Caco-2 (cell line): ENCODE measurements at regions of chr9 and their contacts with region 1.

Region 1: DNA sequence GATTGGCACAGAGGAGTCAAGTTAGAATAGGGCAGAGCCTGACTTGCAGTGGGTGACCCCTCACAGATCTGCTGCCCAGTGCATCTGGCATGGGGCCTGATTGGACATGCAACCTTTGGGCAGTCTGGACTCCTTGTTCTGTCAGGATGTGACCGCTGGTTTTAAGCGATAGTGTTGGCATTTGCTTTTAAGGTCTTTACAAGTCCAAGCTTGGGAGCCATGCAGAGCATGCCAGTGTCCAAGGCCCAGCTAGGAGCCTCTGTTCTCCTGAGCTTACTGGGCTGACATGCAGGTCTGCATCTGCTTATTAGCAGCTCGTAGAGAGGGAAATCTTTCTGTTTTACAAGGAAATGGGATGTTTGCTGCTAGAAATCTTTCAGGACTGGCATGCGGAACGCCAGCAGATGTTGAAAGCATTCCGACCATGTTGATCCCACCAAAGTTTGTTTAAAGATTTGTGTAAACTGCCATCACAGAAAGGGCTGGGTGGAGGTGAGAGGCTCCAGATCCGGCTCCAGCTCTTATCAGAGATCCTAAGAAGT is 27.5 kb downstream of the GADD45G start:
- DNase-seq: peak in 1 of 2 experiments; percentile 44
- H3K4me3 ChIP-seq: no peak overlapping the region
- H3K4me3 Mint-ChIP-seq: no peak overlapping the region
- H3K27ac Mint-ChIP-seq: peak overlapping the region; percentile 62
- H3K4me1 ChIP-seq: peaks cover 6% of the 10 kb centered on the region; the same call in 1 of the 2 replicates
- H3K4me1 Mint-ChIP-seq: peaks cover 6% of the 10 kb centered on the region
- H3K27me3 ChIP-seq: no peaks in the 10 kb centered on the region
- H3K27me3 Mint-ChIP-seq: no peaks in the 10 kb centered on the region
- CTCF ChIP-seq: no peak

Region 2: DNA sequence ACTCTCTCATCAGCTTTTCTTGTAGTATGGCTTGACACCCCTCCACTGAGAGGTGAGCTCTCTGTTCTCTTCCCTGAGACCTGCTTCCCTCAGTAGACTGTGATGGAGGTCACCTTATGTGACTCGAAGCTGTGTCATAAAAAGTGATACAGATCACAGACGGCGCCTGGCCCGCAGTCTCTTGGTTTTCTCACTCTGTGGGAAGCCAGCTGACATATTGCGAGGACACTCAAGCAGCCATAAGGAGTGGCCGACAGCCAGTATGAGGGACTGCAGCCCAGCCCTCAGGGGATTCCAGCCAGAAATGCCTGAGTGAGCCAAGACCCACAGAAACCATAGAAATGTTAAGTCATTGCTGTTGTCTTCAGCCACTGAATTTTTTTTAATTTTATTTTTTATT is 10.5 kb after region 1 on chr9:
- CTCF ChIA-PET with region 1: no interaction called
- POLR2A ChIA-PET with region 1: no interaction called
- intact Hi-C with region 1: loop called (anchors 1 kb)
- DNase-seq: no peak
- H3K4me3 ChIP-seq: no peak overlapping the region
- H3K4me3 Mint-ChIP-seq: no peak overlapping the region
- H3K27ac Mint-ChIP-seq: no peak overlapping the region
- H3K4me1 ChIP-seq: peaks cover 14% of the 10 kb centered on the region
- H3K4me1 Mint-ChIP-seq: no peaks in the 10 kb centered on the region
- H3K27me3 ChIP-seq: no peaks in the 10 kb centered on the region
- H3K27me3 Mint-ChIP-seq: no peaks in the 10 kb centered on the region
- CTCF ChIP-seq: no peak